Caco-2 (cell line): ENCODE measurements at regions of chr10 and their contacts with region 1.

Region 1: GRCh38 chr10:73096449-73097304 is at the start of gene P4HA1:
- DNase-seq: peak; percentile 99
- H3K4me3 ChIP-seq: peak within 1 kb of the TSS; percentile 70
- H3K4me3 Mint-ChIP-seq: peak within 1 kb of the TSS; percentile 98
- H3K27ac Mint-ChIP-seq: peak within 1 kb of the TSS; percentile 96
- H3K4me1 ChIP-seq: peaks cover 16% of the 10 kb centered on the region; the same call in 1 of the 2 replicates
- H3K4me1 Mint-ChIP-seq: peaks cover 14% of the 10 kb centered on the region
- H3K27me3 ChIP-seq: no peaks in the 10 kb centered on the region
- H3K27me3 Mint-ChIP-seq: no peaks in the 10 kb centered on the region
- CTCF ChIP-seq: peak; percentile 47 to 91
- total RNA-seq, gene P4HA1: 44.3 and 46.5 TPM in 2 replicates

Region 2: GRCh38 chr10:73083221-73083620 is 13.5 kb before region 1 on chr10:
- CTCF ChIA-PET with region 1: interaction called, 14 read pairs
- POLR2A ChIA-PET with region 1: interaction called, 4 read pairs
- intact Hi-C with region 1: no loop called
- DNase-seq: no peak
- H3K4me3 ChIP-seq: no peak overlapping the region
- H3K4me3 Mint-ChIP-seq: no peak overlapping the region
- H3K27ac Mint-ChIP-seq: no peak overlapping the region
- H3K4me1 ChIP-seq: no peaks in the 10 kb centered on the region
- H3K4me1 Mint-ChIP-seq: no peaks in the 10 kb centered on the region
- H3K27me3 ChIP-seq: no peaks in the 10 kb centered on the region
- H3K27me3 Mint-ChIP-seq: no peaks in the 10 kb centered on the region
- CTCF ChIP-seq: no peak

Region 3: GRCh38 chr10:73117976-73118743 is 21.5 kb after region 1 on chr10:
- CTCF ChIA-PET with region 1: interaction called, 30 read pairs
- POLR2A ChIA-PET with region 1: interaction called, 11 read pairs
- intact Hi-C with region 1: loop called (anchors 1 kb)
- DNase-seq: peak in 1 of 2 experiments; percentile 58
- H3K4me3 ChIP-seq: no peak overlapping the region
- H3K4me3 Mint-ChIP-seq: peak overlapping the region; percentile 45
- H3K27ac Mint-ChIP-seq: peak overlapping the region; percentile 45
- H3K4me1 ChIP-seq: peaks cover 26% of the 10 kb centered on the region
- H3K4me1 Mint-ChIP-seq: peaks cover 14% of the 10 kb centered on the region
- H3K27me3 ChIP-seq: no peaks in the 10 kb centered on the region
- H3K27me3 Mint-ChIP-seq: no peaks in the 10 kb centered on the region
- CTCF ChIP-seq: no peak

Region 4: DNA sequence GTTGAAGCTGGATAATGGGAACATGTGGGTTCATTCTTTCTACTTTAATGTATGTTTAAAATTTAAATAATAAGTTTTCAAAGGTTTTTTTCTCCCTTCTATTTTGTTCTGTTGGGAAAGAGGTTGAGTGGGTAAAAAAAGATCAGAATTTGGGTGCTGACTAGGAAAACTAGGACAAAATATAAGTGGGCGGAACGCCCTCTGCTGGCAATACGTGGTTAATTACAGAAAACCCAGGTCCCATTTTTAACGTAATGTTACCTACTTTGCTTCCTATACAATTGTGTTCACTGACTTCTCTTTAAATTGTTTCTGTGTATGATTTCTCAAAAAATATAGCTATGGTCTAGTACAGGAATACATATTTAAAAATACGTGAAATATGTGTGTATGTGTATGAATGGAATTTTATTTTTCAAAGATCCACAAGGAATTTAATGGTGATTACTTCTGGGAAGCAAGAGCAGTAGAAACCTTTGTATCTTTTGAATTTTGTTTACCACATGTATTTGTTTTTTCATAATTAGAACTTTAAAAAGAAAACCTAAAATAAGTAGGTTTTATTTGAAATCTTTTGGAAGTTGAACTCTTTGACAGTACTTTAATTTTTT is 62.5 kb after region 1 on chr10:
- CTCF ChIA-PET with region 1: interaction called, 22 read pairs
- POLR2A ChIA-PET with region 1: no interaction called
- intact Hi-C with region 1: loop called (anchors 1 kb)
- DNase-seq: peak; percentile 59 to 80
- H3K4me3 ChIP-seq: no peak overlapping the region
- H3K4me3 Mint-ChIP-seq: no peak overlapping the region
- H3K27ac Mint-ChIP-seq: no peak overlapping the region
- H3K4me1 ChIP-seq: peaks cover 5% of the 10 kb centered on the region
- H3K4me1 Mint-ChIP-seq: peaks cover 14% of the 10 kb centered on the region
- H3K27me3 ChIP-seq: no peaks in the 10 kb centered on the region
- H3K27me3 Mint-ChIP-seq: no peaks in the 10 kb centered on the region
- CTCF ChIP-seq: peak; percentile 89

Region 5: GRCh38 chr10:73218431-73219191 is 121.9 kb after region 1 on chr10:
- CTCF ChIA-PET with region 1: interaction called, 9 read pairs
- POLR2A ChIA-PET with region 1: interaction called, 3 read pairs
- intact Hi-C with region 1: loop called (anchors 2 kb)
- DNase-seq: peak in 1 of 2 experiments; percentile 60
- H3K4me3 ChIP-seq: no peak overlapping the region
- H3K4me3 Mint-ChIP-seq: no peak overlapping the region
- H3K27ac Mint-ChIP-seq: peak overlapping the region; percentile 82
- H3K4me1 ChIP-seq: peaks cover 25% of the 10 kb centered on the region
- H3K4me1 Mint-ChIP-seq: peaks cover 22% of the 10 kb centered on the region
- H3K27me3 ChIP-seq: no peaks in the 10 kb centered on the region
- H3K27me3 Mint-ChIP-seq: no peaks in the 10 kb centered on the region
- CTCF ChIP-seq: peak; percentile 61 to 74

Region 6: GRCh38 chr10:73246783-73247508 is 150.3 kb after region 1 on chr10 and contains the start of gene DNAJC9:
- CTCF ChIA-PET with region 1: interaction called, 8 read pairs
- POLR2A ChIA-PET with region 1: interaction called, 31 read pairs
- intact Hi-C with region 1: no loop called
- DNase-seq: peak; percentile 99 to 100
- H3K4me3 ChIP-seq: peak within 1 kb of the TSS; percentile 86
- H3K4me3 Mint-ChIP-seq: peak within 1 kb of the TSS; percentile 99
- H3K27ac Mint-ChIP-seq: peak within 1 kb of the TSS; percentile 100
- H3K4me1 ChIP-seq: 0 out of 2 replicates have a peak, but pooled peaks cover 13% of the 10 kb centered on the region
- H3K4me1 Mint-ChIP-seq: peaks cover 43% of the 10 kb centered on the region
- H3K27me3 ChIP-seq: no peaks in the 10 kb centered on the region
- H3K27me3 Mint-ChIP-seq: no peaks in the 10 kb centered on the region
- CTCF ChIP-seq: peak in 1 of 2 experiments; percentile 44
- total RNA-seq, gene DNAJC9: 64.4 and 65.2 TPM in 2 replicates

Region 7: GRCh38 chr10:73495884-73496674 is 399.4 kb after region 1 on chr10 and contains the start of gene PPP3CB:
- CTCF ChIA-PET with region 1: no interaction called
- POLR2A ChIA-PET with region 1: interaction called, 12 read pairs
- intact Hi-C with region 1: no loop called
- DNase-seq: peak; percentile 93 to 98
- H3K4me3 ChIP-seq: peak within 1 kb of the TSS; percentile 86
- H3K4me3 Mint-ChIP-seq: peak within 1 kb of the TSS; percentile 89
- H3K27ac Mint-ChIP-seq: peak within 1 kb of the TSS; percentile 84
- H3K4me1 ChIP-seq: peaks cover 8% of the 10 kb centered on the region; the same call in 1 of the 2 replicates
- H3K4me1 Mint-ChIP-seq: peaks cover 27% of the 10 kb centered on the region
- H3K27me3 ChIP-seq: no peaks in the 10 kb centered on the region
- H3K27me3 Mint-ChIP-seq: no peaks in the 10 kb centered on the region
- CTCF ChIP-seq: no peak
- total RNA-seq, gene PPP3CB: 41.5 and 44.5 TPM in 2 replicates